RWPE1 (cell line): ENCODE measurements at regions of chr16 and their contacts with region 1.

Region 1: DNA sequence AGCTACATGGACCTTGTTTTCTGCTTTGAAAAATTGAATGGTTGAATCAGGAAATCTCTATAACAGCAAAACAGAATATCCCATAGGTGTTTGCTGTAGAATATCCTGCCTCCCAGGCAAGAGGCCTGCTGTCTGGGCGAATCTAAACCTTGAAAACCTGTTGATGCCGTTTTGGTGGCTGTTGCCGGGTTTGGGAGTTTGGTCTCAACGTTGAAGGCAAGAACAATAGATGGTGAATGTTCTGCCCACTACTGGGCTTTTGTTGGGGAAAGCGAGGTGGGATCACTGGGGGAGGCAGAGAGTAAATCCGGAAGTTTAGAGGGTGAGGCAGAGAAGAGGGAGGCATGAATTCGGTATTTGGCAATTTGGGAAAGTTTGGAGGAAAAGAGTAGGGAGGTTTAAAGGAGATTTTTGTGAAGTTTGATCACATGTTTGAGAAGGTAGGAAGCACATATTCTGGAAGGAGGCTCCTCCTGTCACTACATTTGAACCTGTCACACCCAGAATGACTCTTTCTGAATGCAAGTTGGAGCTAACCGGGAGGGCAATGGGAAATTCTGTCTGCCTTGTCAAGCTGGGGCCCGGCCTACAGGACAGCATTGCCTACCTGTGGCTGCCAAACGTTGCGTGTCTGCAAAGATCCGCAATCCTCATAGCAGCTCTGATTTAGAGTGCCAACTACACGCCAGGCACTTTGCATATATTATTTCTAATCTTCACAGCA is 46.5 kb downstream of the GPRC5B start:
- DNase-seq: no peak
- H3K27ac ChIP-seq: no peak overlapping the region
- CTCF ChIP-seq: no peak

Region 2: DNA sequence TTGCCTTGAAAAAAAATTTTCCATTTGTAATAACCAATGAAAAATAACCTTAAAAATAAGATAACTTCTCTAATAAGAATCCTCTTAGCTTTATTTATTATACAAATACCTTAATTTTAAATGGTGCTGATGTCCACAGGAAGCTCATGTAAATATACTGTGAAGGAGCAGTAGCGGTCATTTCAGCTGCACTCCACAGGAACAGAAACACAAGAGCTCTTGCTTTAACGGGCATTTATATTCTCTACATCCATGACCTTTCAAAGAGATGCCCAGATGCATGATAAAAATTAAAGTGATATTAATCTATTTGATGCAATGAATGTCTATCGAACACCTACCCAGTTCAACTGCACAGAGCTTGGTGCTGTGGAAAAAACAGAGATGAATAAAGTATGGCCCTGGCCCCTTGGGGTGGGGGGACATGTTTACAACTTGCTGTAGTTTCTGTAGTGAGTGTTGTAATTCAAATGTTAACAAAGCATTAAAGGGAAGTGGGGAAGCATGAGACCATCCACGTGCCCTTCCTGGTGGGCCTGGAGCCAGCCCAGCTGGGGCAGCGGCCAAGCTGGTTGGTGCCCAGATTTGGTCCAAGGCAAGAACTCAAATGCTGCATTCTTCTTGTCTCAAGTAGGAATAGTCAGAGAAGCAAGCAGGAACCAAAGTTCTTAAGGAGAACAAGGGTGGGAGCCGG is 72.1 kb before region 1 on chr16:
- CTCF ChIA-PET with region 1: no interaction called
- POLR2A ChIA-PET with region 1: interaction called, 13 read pairs
- DNase-seq: no peak
- H3K27ac ChIP-seq: no peak overlapping the region
- CTCF ChIP-seq: no peak